Transverse colon (tissue), 4 donors: ENCODE measurements at regions of chr11 and their contacts with region 1.

Region 1: GRCh38 chr11:95337175-95337957 is 106.4 kb upstream of the SESN3 start:
- DNase-seq: peak; percentile 43
- H3K4me3 ChIP-seq: no peak overlapping the region
- H3K27ac ChIP-seq: peak overlapping the region; percentile 80 to 86 (median 81)
- H3K4me1 ChIP-seq: peaks cover 14 to 32% (median 23%) of the 10 kb centered on the region in 4 donors
- H3K27me3 ChIP-seq: no peaks in the 10 kb centered on the region
- CTCF ChIP-seq: no peak
- EP300 ChIP-seq: no peak
- POLR2A ChIP-seq: no peak

Region 2: DNA sequence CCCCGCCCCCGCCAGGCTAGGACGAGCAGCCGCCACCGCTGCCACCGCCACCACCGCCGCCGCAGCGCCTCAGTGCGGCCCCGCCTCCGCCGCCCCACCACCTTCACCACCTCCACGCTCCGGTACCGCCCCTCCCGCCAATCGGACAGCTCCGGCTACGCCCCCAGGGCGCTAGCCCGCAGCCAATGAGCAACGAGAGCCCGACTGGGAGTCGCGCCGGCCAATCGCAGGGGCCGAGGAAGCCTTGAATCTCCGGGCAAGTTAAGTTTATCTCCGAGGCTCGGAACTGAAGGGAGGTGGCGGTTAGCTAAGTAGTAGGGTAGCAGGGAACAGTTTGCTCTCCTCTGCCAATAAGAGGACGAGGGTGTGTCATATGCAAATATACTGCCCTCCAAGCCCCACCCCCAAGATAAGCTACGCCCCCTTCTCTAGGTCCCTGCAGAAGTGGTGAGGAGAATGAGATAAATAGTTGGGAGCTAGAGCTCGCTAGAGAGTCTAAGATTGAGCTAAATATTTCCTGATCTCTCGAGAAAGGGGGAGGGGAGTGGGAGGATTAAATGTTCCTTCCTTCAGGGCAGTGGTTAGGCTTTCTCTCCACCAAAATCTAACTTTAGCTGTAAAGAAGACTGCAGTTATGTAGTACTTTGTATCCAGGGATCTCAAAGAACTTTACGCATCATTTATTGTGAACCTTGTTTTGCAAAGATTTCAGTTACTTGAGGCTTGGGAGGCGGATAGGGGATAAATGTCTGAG is 106.1 kb before region 1 on chr11 and contains the start of gene SESN3:
- in situ Hi-C with region 1: no loop called
- intact Hi-C with region 1: loop called (anchors 10 kb)
- DNase-seq: peak; percentile 98
- H3K4me3 ChIP-seq: peak within 1 kb of the TSS; percentile 56 to 98 (median 84)
- H3K27ac ChIP-seq: peak within 1 kb of the TSS; percentile 85 to 95 (median 90)
- H3K4me1 ChIP-seq: peaks cover 6 to 51% (median 9%) of the 10 kb centered on the region in 4 donors
- H3K27me3 ChIP-seq: no peaks in the 10 kb centered on the region
- CTCF ChIP-seq: no peak
- EP300 ChIP-seq: no peak
- POLR2A ChIP-seq: peak; percentile 65
- total RNA-seq, gene SESN3: 3.4 to 16.8 (median 11.0) TPM

Region 3: DNA sequence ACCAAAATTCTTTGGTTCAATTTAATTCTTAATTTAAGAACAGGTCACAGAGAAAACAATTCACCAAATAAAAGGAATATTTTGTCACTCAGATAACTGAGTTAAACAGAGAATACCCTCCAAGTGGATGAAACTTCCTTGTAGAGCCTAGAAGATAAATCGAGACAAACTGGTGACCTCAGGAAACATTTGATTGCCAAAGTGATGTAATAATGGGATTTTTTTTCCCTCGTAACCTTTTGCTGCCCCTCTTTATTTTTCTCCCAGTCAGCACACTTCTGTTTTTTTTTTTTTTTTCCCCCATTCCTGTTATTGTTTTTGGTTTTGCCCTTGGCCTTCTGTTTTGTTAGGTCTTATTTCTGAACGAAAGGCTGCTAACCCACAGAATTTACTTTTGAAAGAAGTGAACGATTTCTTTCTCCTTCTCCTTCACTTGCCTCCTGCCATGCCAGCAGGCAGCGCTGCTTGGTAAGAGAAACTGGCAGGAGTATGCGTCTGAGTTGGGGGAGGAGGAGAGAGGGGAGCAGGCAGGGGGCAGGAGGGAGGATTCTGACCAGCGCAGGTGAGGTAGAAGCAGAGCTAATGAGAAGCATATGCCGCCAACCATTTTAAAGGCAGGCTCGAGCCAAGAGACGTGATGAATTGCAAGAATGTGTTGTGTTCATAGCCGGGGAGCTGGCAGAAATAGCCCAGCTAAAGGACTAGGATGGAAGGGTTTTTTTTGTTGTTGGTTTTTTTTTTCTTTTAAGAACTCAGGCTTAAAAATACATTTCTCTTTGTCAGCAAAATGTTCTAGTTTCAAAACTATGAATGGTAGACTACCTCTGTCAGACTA is 708.5 kb after region 1 on chr11:
- in situ Hi-C with region 1: no loop called
- intact Hi-C with region 1: no loop called
- DNase-seq: no peak
- H3K4me3 ChIP-seq: no peak overlapping the region
- H3K27ac ChIP-seq: peak overlapping the region in 1 of 4 donors; percentile 23
- H3K4me1 ChIP-seq: peaks cover 0 to 3% (median 0%) of the 10 kb centered on the region in 4 donors
- H3K27me3 ChIP-seq: no peaks in the 10 kb centered on the region
- CTCF ChIP-seq: no peak
- EP300 ChIP-seq: no peak
- POLR2A ChIP-seq: no peak